T-cell (primary cell): ENCODE measurements at regions of chr12 and their contacts with region 1.

Region 1: GRCh38 chr12:76790564-76791552 is 26.9 kb downstream of the ZDHHC17 start:
- DNase-seq: peak in 1 of 35 experiments; percentile 56
- ATAC-seq: peak in 1 of 4 experiments; percentile 45
- H3K4me3 ChIP-seq: no peak overlapping the region
- H3K4me3 Mint-ChIP-seq: no peak overlapping the region
- H3K27ac ChIP-seq: no peak overlapping the region
- H3K27ac Mint-ChIP-seq: peak overlapping the region; percentile 3 to 35
- H3K4me1 ChIP-seq: peaks cover 0 to 3% of the 10 kb centered on the region in 2 experiments
- H3K4me1 Mint-ChIP-seq: peaks cover 34 to 48% (median 39%) of the 10 kb centered on the region in 3 donors
- H3K27me3 ChIP-seq: no peaks in the 10 kb centered on the region
- H3K27me3 Mint-ChIP-seq: no peaks in the 10 kb centered on the region

Region 2: DNA sequence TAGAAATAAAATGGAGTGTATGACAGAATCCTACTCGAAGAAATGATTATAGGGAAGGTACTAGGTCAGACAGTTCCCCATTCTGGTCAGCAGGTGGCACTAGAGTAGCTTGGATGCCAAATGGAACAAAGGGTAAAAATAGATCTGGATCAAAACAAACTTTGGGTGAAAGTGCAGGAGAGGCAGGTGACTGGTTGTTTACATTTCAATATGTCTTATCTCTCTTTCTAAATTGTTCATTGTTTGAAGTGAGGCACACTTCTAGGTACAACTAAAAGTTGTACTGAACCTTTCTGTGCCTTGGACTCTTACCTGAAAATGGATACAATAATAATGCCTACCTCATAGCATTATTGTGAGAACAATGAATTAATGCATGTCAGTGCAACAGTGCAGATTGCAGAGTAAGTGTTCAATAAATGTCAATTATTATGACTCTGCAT is 169.3 kb before region 1 on chr12:
- CTCF ChIA-PET with region 1: interaction called, 23 to 56 read pairs
- POLR2A ChIA-PET with region 1: no interaction called
- DNase-seq: peak; percentile 26 to 85 (median 60)
- ATAC-seq: peak; percentile 67 to 83 (median 77)
- H3K4me3 ChIP-seq: no peak overlapping the region
- H3K4me3 Mint-ChIP-seq: no peak overlapping the region
- H3K27ac ChIP-seq: no peak overlapping the region
- H3K27ac Mint-ChIP-seq: no peak overlapping the region
- H3K4me1 ChIP-seq: no peaks in the 10 kb centered on the region
- H3K4me1 Mint-ChIP-seq: peaks cover 4 to 7% (median 5%) of the 10 kb centered on the region in 3 donors
- H3K27me3 ChIP-seq: no peaks in the 10 kb centered on the region
- H3K27me3 Mint-ChIP-seq: peaks cover 0 to 2% of the 10 kb centered on the region in 2 donors

Region 3: DNA sequence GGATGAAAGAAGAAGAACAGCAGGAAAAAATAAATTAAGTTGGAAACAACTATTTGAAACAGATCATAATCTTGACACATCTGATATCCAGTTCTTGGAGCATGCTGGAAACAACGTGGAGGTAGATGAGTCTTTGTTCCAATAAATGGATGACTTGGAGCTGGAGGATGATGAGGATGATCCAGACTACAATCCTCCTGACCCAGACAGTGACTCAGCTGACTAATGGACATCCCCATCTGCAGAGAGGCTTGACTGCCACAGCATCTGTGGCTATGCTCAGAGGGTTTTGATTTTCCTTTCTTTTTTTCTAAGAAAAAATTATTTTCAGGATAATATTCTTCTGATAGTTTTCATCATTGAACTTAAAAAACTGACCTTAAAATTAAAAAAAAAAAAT is 33.2 kb before region 1 on chr12:
- CTCF ChIA-PET with region 1: no interaction called
- POLR2A ChIA-PET with region 1: no interaction called
- DNase-seq: no peak
- ATAC-seq: no peak
- H3K4me3 ChIP-seq: no peak overlapping the region
- H3K4me3 Mint-ChIP-seq: no peak overlapping the region
- H3K27ac ChIP-seq: no peak overlapping the region
- H3K27ac Mint-ChIP-seq: no peak overlapping the region
- H3K4me1 ChIP-seq: no peaks in the 10 kb centered on the region
- H3K4me1 Mint-ChIP-seq: peaks cover 0 to under 1% (median under 1%) of the 10 kb centered on the region in 3 donors
- H3K27me3 ChIP-seq: peaks cover 0 to 3% of the 10 kb centered on the region in 2 experiments
- H3K27me3 Mint-ChIP-seq: no peaks in the 10 kb centered on the region

Region 4: GRCh38 chr12:76777765-76778216 is 13.1 kb before region 1 on chr12:
- CTCF ChIA-PET with region 1: interaction called, 6 to 13 read pairs
- POLR2A ChIA-PET with region 1: no interaction called
- DNase-seq: peak in 2 of 35 experiments; percentile 6 to 16
- ATAC-seq: peak in 2 of 4 experiments; percentile 33 to 62
- H3K4me3 ChIP-seq: no peak overlapping the region
- H3K4me3 Mint-ChIP-seq: peak overlapping the region in 2 of 3 donors; percentile 21 to 44
- H3K27ac ChIP-seq: no peak overlapping the region
- H3K27ac Mint-ChIP-seq: peak overlapping the region; percentile 11 to 53
- H3K4me1 ChIP-seq: peaks cover 4 to 13% of the 10 kb centered on the region in 2 experiments
- H3K4me1 Mint-ChIP-seq: peaks cover 77 to 80% (median 78%) of the 10 kb centered on the region in 3 donors
- H3K27me3 ChIP-seq: no peaks in the 10 kb centered on the region
- H3K27me3 Mint-ChIP-seq: no peaks in the 10 kb centered on the region

Region 5: GRCh38 chr12:76804435-76804976 is 13.6 kb after region 1 on chr12:
- CTCF ChIA-PET with region 1: interaction called in 1 of 2 experiments, 10 read pairs
- POLR2A ChIA-PET with region 1: no interaction called
- DNase-seq: no peak
- ATAC-seq: no peak
- H3K4me3 ChIP-seq: no peak overlapping the region
- H3K4me3 Mint-ChIP-seq: no peak overlapping the region
- H3K27ac ChIP-seq: no peak overlapping the region
- H3K27ac Mint-ChIP-seq: no peak overlapping the region
- H3K4me1 ChIP-seq: no peaks in the 10 kb centered on the region
- H3K4me1 Mint-ChIP-seq: peaks cover 8 to 18% (median 10%) of the 10 kb centered on the region in 3 donors
- H3K27me3 ChIP-seq: no peaks in the 10 kb centered on the region
- H3K27me3 Mint-ChIP-seq: no peaks in the 10 kb centered on the region

Region 6: DNA sequence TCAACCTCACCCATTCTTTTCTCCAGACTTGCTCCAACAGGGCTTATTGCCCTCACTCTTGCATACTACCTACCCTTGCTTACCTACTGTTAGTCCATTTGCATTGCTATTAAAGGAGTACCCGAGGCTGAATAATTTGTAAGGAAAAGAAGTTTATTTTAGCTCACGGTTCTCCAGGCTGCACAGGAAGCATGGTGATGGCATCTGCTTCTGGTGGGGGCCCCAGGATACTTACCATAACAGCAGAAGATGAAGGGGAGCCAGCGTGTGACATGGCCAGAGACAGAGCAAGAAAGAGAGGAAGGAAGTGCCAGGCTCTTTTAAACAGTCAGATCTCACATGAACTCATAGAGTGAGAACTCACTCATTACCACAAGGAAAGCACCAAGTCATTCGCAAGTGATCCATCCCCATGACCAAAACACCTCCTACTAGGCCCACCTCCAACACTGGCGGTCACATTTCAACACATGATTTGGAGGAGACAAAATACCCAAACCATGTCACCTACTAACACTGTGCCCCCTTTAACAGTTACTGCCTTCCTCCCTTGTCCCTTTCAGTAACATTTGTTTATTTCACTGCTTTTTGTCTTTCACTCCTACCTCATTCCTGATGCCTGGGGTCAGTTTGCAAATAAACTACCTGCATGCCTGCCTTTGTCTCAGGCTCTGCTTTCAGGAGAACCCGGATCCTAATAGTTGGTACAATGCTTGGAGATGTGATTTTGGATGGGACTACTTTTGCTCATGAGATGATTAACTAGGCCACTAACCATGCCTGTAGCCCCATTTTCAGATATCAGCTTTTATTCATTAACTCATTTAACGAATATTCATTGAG is 129.5 kb after region 1 on chr12:
- CTCF ChIA-PET with region 1: no interaction called
- POLR2A ChIA-PET with region 1: no interaction called
- DNase-seq: no peak
- ATAC-seq: peak in 1 of 4 experiments; percentile 46
- H3K4me3 ChIP-seq: no peak overlapping the region
- H3K4me3 Mint-ChIP-seq: no peak overlapping the region
- H3K27ac ChIP-seq: no peak overlapping the region
- H3K27ac Mint-ChIP-seq: no peak overlapping the region
- H3K4me1 ChIP-seq: peaks cover 0 to 3% of the 10 kb centered on the region in 2 experiments
- H3K4me1 Mint-ChIP-seq: peaks cover 0 to 11% (median 6%) of the 10 kb centered on the region in 3 donors
- H3K27me3 ChIP-seq: peaks cover 0 to 3% of the 10 kb centered on the region in 2 experiments
- H3K27me3 Mint-ChIP-seq: peaks cover 0 to 2% of the 10 kb centered on the region in 2 donors

Region 7: DNA sequence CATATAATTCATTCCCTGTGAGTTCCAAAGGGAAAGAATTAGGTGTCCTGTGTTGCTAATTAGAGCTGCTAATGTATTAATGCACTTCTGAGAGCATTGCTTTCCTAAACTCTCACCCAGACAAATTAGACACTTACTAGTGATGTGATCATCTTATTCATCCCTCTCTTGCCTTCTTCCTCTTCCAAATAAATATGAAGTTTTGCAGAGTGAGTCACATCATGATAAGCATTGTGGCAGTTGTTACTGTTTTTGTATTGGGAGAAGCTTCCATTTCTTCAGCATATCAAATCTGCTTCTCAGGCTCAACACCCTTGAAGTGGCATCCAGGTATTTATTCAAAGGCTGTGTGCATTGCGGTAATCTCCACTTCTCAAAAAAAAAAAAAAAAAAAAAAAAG is 311.8 kb after region 1 on chr12:
- CTCF ChIA-PET with region 1: interaction called in 1 of 2 experiments, 10 read pairs
- POLR2A ChIA-PET with region 1: no interaction called
- DNase-seq: no peak
- ATAC-seq: no peak
- H3K4me3 ChIP-seq: no peak overlapping the region
- H3K4me3 Mint-ChIP-seq: no peak overlapping the region
- H3K27ac ChIP-seq: no peak overlapping the region
- H3K27ac Mint-ChIP-seq: no peak overlapping the region
- H3K4me1 ChIP-seq: no peaks in the 10 kb centered on the region
- H3K4me1 Mint-ChIP-seq: no peaks in the 10 kb centered on the region
- H3K27me3 ChIP-seq: peaks cover 0 to 3% of the 10 kb centered on the region in 2 experiments
- H3K27me3 Mint-ChIP-seq: peaks cover 10 to 17% of the 10 kb centered on the region in 2 donors